Right ventricle myocardium inferior (tissue), 1 donor: ENCODE measurements at regions of chr12 and their contacts with region 1.

Region 1: GRCh38 chr12:109804820-109805761 is 28.1 kb downstream of the TRPV4 start:
- DNase-seq: peak; percentile 85
- ATAC-seq: peak; percentile 77

Region 2: GRCh38 chr12:109844983-109845823 is 40.1 kb after region 1 on chr12:
- intact Hi-C with region 1: loop called (anchors 1 kb)
- DNase-seq: peak; percentile 96
- ATAC-seq: peak; percentile 95

Region 3: GRCh38 chr12:109880016-109880931 is 75.2 kb after region 1 on chr12 and contains the start of gene GLTP:
- intact Hi-C with region 1: loop called (anchors 1 kb)
- DNase-seq: peak; percentile 96
- ATAC-seq: peak; percentile 98
- total RNA-seq, gene GLTP: 23.3 TPM